ENCODE measurements at regions of chr5 and their contacts with region 1.

Region 1: GRCh38 chr5:167723254-167723871 is 568.1 kb upstream of the WWC1 start:
- DNase-seq: peak in 8 of 9 donors; percentile 11 to 60 (median 39)
- ATAC-seq: peak; percentile 87
- H3K4me3 ChIP-seq: no peak overlapping the region
- H3K4me3 Mint-ChIP-seq: no peak overlapping the region
- H3K27ac ChIP-seq: no peak overlapping the region
- H3K27ac Mint-ChIP-seq: no peak overlapping the region
- H3K4me1 ChIP-seq: peaks cover 0 to 4% of the 10 kb centered on the region in 2 donors
- H3K4me1 Mint-ChIP-seq: peaks cover 0 to 8% (median 6%) of the 10 kb centered on the region in 7 donors
- H3K27me3 ChIP-seq: no peaks in the 10 kb centered on the region
- H3K27me3 Mint-ChIP-seq: peaks cover 0 to 13% (median 8%) of the 10 kb centered on the region in 5 donors

Region 2: GRCh38 chr5:168047043-168047668 is 323.8 kb after region 1 on chr5:
- CTCF ChIA-PET with region 1: no interaction called
- POLR2A ChIA-PET with region 1: no interaction called
- intact Hi-C with region 1: loop called in 1 of 2 experiments (anchors 10 kb)
- DNase-seq: no peak
- ATAC-seq: no peak
- H3K4me3 ChIP-seq: no peak overlapping the region
- H3K4me3 Mint-ChIP-seq: no peak overlapping the region
- H3K27ac ChIP-seq: no peak overlapping the region
- H3K27ac Mint-ChIP-seq: no peak overlapping the region
- H3K4me1 ChIP-seq: no peaks in the 10 kb centered on the region
- H3K4me1 Mint-ChIP-seq: no peaks in the 10 kb centered on the region
- H3K27me3 ChIP-seq: no peaks in the 10 kb centered on the region
- H3K27me3 Mint-ChIP-seq: peaks cover 0 to 11% (median 0%) of the 10 kb centered on the region in 5 donors

Region 3: DNA sequence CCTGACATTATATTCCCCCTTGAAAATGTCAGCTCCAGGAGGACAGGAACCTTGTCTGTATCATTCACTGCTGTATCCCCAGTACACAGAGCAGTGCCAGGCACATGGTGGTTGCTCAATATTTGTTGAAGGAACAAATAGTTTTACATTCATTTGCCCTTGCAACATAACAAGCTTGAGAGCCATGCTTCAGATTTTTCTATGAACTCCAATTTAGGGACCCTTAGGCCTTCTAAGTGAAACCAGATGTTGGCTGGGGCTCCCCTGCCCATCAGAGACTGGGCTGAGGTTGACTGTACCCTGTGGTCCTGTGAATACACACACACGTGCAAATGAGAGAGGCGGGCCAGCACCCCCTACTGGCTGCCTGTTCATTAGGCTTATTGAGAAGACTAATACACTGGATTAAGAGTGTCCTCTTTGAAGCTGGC is 353.2 kb after region 1 on chr5:
- CTCF ChIA-PET with region 1: no interaction called
- POLR2A ChIA-PET with region 1: no interaction called
- intact Hi-C with region 1: loop called in 1 of 2 experiments (anchors 10 kb)
- DNase-seq: no peak
- ATAC-seq: no peak
- H3K4me3 ChIP-seq: no peak overlapping the region
- H3K4me3 Mint-ChIP-seq: no peak overlapping the region
- H3K27ac ChIP-seq: no peak overlapping the region
- H3K27ac Mint-ChIP-seq: no peak overlapping the region
- H3K4me1 ChIP-seq: no peaks in the 10 kb centered on the region
- H3K4me1 Mint-ChIP-seq: peaks cover 0 to 6% (median 3%) of the 10 kb centered on the region in 7 donors
- H3K27me3 ChIP-seq: no peaks in the 10 kb centered on the region
- H3K27me3 Mint-ChIP-seq: peaks cover 0 to 8% (median 2%) of the 10 kb centered on the region in 5 donors

Region 4: DNA sequence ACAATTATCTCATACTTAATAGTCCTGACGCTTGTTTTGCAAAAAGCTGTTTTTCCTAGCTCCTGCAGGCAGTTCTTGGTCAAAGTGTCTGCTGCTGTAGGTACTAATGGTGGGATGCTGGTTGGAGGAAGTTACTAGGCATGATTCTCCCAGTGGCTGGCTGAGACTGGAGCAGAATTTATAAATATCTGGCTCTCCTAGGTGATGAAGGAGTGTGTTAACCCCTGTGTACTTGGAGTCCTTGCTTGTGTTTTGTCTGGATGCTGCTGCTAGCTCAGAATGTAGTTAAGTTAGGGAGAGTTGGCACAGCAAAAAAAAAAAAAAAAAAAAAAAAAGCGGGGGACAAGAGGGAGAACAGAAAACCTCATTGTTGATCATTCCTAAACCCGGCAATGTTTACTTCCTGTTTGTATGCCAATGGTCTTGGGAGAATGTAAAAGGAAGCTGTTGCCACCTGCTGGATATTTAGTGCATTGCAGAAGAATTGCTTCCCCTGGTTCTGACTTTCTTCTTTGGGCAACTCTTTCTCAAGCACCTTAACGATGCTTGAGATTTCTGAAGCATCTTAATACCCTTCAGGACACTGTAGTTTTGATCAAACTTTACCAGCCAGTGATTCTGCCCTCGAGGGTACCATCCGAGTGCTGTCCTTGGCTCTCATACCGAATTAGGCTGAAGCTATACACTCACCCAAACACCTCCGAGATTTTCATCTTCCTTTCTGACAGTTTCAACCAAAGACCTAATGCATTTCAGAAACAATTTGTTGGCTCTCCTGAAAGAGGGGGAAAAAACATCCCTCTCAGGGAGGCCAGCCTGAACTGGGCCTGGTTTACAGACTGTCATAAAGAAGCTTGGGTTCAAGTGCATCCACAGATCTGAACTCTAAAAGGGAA is 496.4 kb after region 1 on chr5:
- CTCF ChIA-PET with region 1: interaction called, 5 read pairs
- POLR2A ChIA-PET with region 1: no interaction called
- intact Hi-C with region 1: loop called in 1 of 2 experiments (anchors 1 kb)
- DNase-seq: peak in 5 of 9 donors; percentile 13 to 48 (median 21)
- ATAC-seq: peak; percentile 78
- H3K4me3 ChIP-seq: no peak overlapping the region
- H3K4me3 Mint-ChIP-seq: peak overlapping the region in 2 of 10 donors; percentile 25 to 42
- H3K27ac ChIP-seq: no peak overlapping the region
- H3K27ac Mint-ChIP-seq: no peak overlapping the region
- H3K4me1 ChIP-seq: no peaks in the 10 kb centered on the region
- H3K4me1 Mint-ChIP-seq: peaks cover 0 to 16% (median 5%) of the 10 kb centered on the region in 7 donors
- H3K27me3 ChIP-seq: no peaks in the 10 kb centered on the region
- H3K27me3 Mint-ChIP-seq: peaks cover 0 to 12% (median 0%) of the 10 kb centered on the region in 5 donors

Measured in naive thymus-derived CD4-positive, alpha-beta T cell (primary cell).